Right ventricle myocardium inferior (tissue), 1 donor: ENCODE measurements at regions of chr9 and their contacts with region 1.

Region 1: GRCh38 chr9:94681508-94681907 is 42.2 kb upstream of the FBP1 start:
- DNase-seq: peak; percentile 83
- ATAC-seq: peak; percentile 97

Region 2: DNA sequence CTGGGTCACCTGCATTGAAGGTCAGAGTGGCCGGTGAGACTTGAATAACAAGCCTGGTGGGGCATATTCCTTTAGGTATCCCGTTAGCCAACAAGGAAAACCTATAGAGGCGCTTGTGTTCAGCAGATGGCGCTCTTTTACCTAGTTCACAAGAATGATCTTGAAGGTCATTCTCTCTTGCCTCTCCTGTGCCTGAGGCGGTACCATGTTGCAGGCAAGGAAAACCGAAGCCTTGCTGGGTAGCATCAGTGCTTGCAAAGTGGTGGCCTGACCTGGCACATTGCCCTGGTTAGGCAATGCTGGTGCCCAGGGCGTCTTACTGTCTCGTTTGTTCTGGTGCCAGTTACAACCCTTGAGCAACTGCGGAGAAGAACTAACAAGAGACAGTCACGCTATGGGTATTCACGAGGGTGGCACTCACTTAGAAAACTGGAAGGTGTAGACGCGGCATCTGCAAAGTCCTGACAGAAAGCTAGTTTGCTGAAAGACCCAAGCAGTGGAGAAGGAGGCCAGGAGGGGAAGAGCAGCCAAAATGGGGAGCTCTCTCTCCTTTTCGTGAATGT is 101.7 kb after region 1 on chr9:
- intact Hi-C with region 1: loop called (anchors 5 kb)
- DNase-seq: no peak
- ATAC-seq: peak; percentile 79